ENCODE measurements at regions of chr12 and their contacts with region 1.

Region 1: GRCh38 chr12:3034067-3034750 is 43.0 kb upstream of the TSPAN9 start:
- DNase-seq: peak; percentile 89
- ATAC-seq: peak; percentile 96
- H3K4me3 Mint-ChIP-seq: no peak overlapping the region
- H3K27ac Mint-ChIP-seq: peak overlapping the region; percentile 82
- H3K4me1 Mint-ChIP-seq: peaks cover 7% of the 10 kb centered on the region
- H3K27me3 Mint-ChIP-seq: no peaks in the 10 kb centered on the region
- CTCF ChIP-seq: peak; percentile 61

Region 2: DNA sequence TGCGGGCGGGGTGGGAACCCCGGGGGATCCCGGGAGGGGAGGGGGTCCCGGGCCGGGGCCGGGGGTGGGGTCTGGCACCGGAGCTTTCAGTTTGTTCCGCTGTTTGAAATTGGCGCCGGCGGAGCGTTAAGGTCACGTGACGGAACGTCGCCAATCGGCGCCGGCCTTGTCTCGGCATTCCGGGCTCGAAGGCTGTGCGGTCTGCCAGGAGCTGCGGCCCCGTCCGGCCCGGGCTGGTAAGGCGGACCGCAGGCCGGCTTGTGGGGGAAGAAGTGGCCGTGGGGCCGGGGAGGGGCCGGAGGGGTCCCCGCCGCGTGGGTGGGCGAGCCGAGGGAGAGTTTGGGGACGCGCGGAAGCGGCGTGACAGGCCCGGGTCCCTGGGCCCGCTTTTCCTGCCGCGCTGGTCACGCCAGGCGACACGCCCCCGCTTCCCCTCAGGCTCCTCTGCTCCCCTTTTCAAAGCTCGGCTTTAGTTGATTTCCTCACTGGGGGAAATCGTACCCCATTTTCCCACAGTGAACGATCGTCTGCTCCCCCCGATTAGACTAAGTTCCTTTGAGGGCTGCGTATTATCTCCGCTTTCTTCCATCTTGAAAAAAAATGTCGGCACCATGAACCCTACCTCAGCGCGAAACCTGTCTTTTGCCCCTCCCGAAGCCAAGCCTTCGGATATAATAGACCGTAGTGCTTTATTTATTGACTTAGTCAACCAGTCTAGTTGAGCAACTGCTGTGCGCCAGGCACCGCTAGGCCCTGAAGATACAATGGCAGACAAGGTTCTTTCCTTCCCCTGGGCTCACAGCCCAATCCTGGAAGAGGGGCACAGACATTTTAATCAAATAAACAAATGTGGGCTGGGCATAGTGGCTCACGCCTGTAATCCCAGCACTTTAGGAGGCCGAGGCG is 156.9 kb before region 1 on chr12 and contains the starts of genes FOXM1 and RHNO1:
- CTCF ChIA-PET with region 1: interaction called, 17 read pairs
- POLR2A ChIA-PET with region 1: no interaction called
- DNase-seq: peak; percentile 94
- ATAC-seq: peak; percentile 77
- H3K4me3 Mint-ChIP-seq: peak within 1 kb of the TSS; percentile 99
- H3K27ac Mint-ChIP-seq: peak within 1 kb of the TSS; percentile 94
- H3K4me1 Mint-ChIP-seq: peaks cover 25% of the 10 kb centered on the region
- H3K27me3 Mint-ChIP-seq: no peaks in the 10 kb centered on the region
- CTCF ChIP-seq: no peak
- total RNA-seq, gene FOXM1: 99.6 to 118 TPM (median 100 TPM) in 3 replicates
- total RNA-seq, gene RHNO1: 48.0 to 50.3 TPM (median 49.5 TPM) in 3 replicates

Region 3: GRCh38 chr12:2890388-2891239 is 143.6 kb before region 1 on chr12 and contains the start of gene TULP3:
- CTCF ChIA-PET with region 1: interaction called, 24 read pairs
- POLR2A ChIA-PET with region 1: no interaction called
- DNase-seq: peak; percentile 98
- ATAC-seq: peak; percentile 93
- H3K4me3 Mint-ChIP-seq: peak within 1 kb of the TSS; percentile 78
- H3K27ac Mint-ChIP-seq: peak within 1 kb of the TSS; percentile 93
- H3K4me1 Mint-ChIP-seq: peaks cover 18% of the 10 kb centered on the region
- H3K27me3 Mint-ChIP-seq: no peaks in the 10 kb centered on the region; the same call in 1 of the 2 replicates
- CTCF ChIP-seq: no peak
- total RNA-seq, gene TULP3: 17.4 to 18.8 TPM (median 18.0 TPM) in 3 replicates

Region 4: DNA sequence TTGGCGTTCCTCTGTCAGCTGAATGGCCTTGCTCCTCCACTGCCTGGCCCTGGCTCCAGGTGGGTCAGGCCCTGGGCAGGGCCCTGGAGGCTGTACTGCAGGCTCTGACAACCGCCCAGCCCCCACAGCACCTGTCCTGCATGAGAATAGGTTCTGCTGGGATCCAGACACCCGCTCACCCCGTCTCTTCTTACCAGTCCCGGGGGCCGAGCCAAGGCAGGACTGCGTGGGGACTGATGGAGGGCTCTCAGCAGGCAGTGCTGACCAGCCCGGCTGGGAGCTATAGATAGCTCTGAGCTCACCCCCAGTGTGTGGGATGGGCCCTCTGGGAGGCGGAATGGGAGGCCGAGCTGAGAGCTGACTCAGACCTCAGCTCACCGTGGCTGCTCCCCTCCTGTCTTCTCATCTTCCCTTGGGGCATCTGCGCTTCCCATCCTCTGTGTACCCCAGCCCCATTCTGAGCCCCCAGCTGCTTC is 35.4 kb before region 1 on chr12:
- CTCF ChIA-PET with region 1: interaction called, 32 read pairs
- POLR2A ChIA-PET with region 1: no interaction called
- DNase-seq: peak; percentile 68
- ATAC-seq: peak; percentile 75
- H3K4me3 Mint-ChIP-seq: peak overlapping the region; percentile 40
- H3K27ac Mint-ChIP-seq: peak overlapping the region; percentile 92
- H3K4me1 Mint-ChIP-seq: peaks cover 49% of the 10 kb centered on the region
- H3K27me3 Mint-ChIP-seq: no peaks in the 10 kb centered on the region
- CTCF ChIP-seq: no peak

Region 5: DNA sequence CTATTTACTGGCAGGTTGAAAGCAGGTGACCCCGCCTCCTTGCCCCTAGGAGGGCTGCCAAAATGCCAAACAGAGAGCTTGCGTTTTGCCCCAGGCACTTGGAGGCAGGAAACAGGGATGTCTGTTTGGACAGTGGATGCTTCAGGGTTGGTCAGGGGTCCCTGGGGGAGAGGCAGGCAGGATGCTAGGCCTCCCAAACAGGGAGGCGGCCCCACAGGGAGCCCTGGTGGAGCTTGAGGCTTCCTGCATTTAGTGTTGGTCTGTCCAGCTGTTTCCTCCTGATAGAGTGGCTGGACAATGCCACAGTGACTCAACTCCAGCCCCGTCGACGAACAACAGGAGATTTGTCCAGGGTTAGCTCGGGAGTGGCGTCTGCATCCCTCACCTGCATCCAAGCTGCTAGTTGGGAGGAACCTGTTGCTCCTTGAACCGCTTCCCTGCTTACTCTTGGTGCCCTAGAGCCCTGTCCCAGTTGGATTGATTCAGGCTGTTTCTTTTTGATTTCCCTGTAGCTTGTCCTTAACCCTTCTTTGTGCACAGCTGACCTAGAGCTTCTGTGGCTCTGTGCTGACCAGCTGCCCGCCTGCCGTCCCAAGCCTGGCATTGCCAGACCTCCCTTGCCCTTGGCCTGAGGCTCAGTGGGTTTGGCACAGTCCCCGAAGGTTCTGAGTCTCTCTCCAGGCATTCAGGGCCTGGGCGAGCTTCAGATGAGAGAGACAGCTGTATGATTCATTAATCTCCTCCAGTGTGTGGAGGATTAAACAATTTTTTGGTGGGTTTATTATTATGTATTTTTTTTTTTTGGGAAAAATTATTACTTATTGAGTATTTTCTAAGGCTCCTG is 88.8 kb after region 1 on chr12:
- CTCF ChIA-PET with region 1: no interaction called
- POLR2A ChIA-PET with region 1: no interaction called
- DNase-seq: peak; percentile 13
- ATAC-seq: peak; percentile 56
- H3K4me3 Mint-ChIP-seq: no peak overlapping the region
- H3K27ac Mint-ChIP-seq: no peak overlapping the region; the same call in 1 of the 2 replicates
- H3K4me1 Mint-ChIP-seq: peaks cover 5% of the 10 kb centered on the region
- H3K27me3 Mint-ChIP-seq: no peaks in the 10 kb centered on the region; the same call in 1 of the 2 replicates
- CTCF ChIP-seq: no peak